ENCODE measurements at regions of chr1 and their contacts with region 1.

Region 1: DNA sequence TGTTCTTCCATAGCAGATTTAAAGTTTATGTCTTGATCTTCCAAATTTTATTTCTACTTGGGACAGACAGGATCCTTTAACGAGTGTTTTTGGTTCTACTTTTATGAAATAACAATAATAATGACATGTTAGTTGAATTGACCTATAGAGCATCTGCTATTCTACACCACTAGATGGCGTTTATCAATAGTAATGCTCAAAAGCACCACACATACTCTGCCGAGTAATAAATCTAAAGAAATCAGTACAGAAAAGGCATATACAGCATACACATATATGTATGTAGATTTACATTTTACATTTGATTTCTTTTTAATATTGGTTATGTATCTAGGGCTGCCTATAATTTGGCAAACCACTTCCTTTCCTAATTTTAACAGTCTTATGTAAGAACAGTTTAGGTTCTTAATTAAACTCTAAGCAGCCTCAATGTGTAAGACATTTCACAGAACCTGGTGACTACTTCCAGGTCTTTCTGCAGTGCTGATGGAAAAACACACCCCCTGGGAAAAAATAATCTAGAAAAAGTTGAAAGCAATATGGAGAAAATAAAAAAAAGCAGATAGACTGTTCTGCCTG is 5.9 kb upstream of the SIPA1L2 start:
- DNase-seq: no peak

Region 2: GRCh38 chr1:232718928-232719927 is 83.4 kb after region 1 on chr1:
- intact Hi-C with region 1: no loop called
- DNase-seq: no peak

Region 3: DNA sequence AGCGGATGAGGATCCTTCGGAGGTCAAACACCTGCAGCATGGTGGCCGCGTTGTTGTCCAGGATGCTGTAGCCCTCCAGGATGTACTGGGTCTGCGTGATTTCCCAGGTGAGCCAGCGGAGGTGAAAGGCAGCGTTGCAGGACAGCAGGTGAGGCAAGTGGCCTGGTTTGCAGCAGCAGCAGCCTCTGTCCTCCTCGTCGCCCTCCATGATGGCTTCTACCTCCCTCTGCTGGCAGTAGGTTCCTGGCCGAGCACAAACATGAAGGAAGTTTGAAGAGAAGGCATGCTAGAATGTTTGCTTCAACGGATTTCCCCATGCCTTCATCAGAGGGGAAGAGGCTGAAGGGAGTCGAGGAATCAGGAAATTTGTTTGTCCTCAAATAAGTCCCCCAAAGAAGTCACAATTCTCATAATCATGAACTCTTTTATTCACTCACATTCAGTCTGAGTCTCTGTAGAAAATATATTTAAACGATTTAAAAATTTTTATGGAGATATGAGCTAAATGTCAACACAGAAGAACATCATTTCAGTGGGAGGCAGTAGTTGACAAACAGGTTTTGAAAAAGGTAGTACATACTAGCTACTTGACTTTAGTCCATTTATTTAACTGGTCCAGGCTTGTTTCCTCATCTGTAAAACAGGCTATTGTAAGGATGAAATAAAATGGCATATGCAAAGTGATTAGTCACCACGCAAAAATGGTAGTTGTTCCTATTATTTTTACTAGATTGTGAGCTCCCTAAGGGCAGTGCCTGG is 389.5 kb after region 1 on chr1:
- intact Hi-C with region 1: loop called (anchors 2 kb)
- DNase-seq: no peak

Region 4: DNA sequence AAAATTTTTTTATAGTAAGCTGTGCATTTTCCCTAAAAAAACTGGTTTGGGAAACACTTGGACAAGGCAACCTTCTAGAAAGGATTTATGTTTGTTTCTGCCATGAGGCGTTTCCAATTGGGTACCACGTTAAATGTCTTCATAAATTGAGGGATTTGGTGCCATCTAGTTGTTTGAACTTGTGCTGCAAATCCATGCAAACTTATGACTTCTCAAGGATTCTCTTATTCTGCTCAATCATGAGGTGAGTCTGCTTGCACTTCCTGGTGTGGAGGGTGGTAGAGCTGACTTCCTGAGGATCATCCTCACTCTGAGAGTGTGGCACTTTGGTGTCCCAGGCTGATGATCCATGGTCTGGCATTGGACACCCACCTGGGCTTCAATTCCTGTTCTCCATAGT is 536.4 kb after region 1 on chr1:
- intact Hi-C with region 1: loop called (anchors 5 kb)
- DNase-seq: no peak

Region 5: DNA sequence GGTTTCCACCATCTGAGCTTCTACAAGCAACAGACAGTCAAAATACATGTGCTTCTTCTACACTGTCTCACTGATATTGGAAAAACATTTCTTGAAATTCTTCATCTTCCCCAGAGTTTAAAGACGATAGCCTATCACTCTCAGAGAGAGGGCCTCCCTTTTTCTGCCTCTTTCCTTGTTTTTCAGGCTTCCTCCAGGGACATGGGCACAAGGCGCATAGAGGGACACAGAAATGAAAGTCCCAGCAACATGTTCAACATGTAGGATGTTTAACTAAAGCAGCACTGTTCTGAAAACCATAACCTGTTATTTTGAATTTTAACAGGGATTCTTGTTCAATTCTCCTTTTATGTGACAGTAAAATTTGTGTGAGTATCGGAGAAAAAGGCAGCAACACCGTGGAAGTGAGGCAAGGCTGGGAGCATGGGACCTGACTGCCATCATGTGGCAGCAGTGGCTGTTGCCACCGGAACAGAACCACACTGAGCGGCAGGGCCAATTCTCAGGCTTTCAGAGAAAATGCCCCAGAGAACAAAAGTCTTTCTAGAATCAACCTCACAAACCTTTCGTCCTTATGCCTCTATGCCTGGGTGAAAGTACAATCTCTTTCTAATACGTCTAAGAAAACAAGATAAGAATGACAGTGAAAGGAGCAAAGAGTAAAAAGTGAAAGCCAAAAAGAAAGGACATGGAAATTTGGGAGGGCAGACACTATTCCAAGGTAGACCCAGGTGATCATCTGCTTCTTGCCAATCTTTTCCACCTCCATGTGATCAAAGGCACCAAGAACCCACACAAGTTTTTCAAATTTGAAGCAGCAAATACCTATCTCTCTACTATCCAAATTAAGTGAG is 605.2 kb after region 1 on chr1:
- intact Hi-C with region 1: loop called (anchors 2 kb)
- DNase-seq: peak; percentile 87